ENCODE measurements at regions of chr1 and their contacts with region 1.

Region 1: GRCh38 chr1:194289569-194290266 is 1103.3 kb upstream of the B3GALT2 start:
- DNase-seq: peak; percentile 35
- ATAC-seq: peak; percentile 91
- H3K4me3 Mint-ChIP-seq: peak overlapping the region; percentile 38
- H3K27ac Mint-ChIP-seq: peak overlapping the region; percentile 77
- H3K4me1 Mint-ChIP-seq: peaks cover 23% of the 10 kb centered on the region
- H3K27me3 Mint-ChIP-seq: peaks cover 3% of the 10 kb centered on the region
- CTCF ChIP-seq: no peak

Region 2: DNA sequence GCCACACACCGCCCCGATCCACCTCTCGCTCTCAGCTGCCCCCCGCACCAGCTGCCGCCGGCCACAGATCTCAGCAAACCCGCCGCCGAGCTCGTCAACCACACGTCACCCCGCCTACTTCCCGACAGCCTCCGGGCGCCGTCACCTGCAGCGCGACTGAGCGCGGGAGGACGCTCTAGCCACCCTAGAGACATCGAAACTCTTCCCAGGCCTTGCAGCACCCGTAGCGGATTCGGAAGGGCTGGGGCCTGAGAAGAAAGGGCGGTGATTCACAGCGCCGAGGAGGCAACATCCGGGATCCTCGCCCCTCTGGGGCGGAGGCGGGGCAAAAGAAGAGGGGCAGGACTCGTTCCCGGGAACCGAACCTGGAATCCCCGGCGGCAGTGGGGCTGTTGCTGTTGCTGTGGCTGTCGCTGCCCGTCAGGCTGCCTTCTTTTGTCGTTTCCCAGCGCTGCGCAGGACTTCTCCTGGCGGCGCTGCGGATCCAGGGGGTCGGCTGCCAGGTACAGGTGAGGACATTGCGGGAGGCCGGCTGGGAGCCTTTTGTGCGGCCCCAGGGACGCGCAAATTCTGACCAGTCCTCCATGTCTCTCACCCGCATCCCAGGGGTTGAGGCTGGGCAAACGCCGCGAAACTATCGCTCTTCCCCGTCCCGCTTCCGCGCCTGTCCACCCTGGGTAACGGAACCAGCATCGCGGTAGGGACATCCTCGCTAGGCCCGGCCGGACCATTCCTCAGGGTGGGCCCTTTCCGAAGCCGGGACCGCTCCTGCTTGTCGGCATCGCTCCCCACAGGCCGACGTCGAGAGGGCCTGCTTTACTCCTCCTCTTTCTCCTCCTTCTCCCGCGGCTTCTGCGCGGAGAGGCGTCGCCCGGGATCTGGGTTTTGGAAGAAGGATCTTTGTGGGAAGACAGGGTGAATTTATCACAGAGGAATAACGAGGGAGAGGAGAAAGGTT is 1230.2 kb before region 1 on chr1 and contains the starts of genes RO60 and UCHL5:
- CTCF ChIA-PET with region 1: no interaction called
- POLR2A ChIA-PET with region 1: no interaction called
- intact Hi-C with region 1: loop called (anchors 2 kb)
- DNase-seq: peak; percentile 85
- ATAC-seq: peak; percentile 94
- H3K4me3 Mint-ChIP-seq: peak within 1 kb of the TSS; percentile 100
- H3K27ac Mint-ChIP-seq: peak within 1 kb of the TSS; percentile 99
- H3K4me1 Mint-ChIP-seq: peaks cover 54% of the 10 kb centered on the region
- H3K27me3 Mint-ChIP-seq: no peaks in the 10 kb centered on the region
- CTCF ChIP-seq: no peak
- total RNA-seq, gene RO60: 55.9 and 61.1 TPM in 2 replicates
- total RNA-seq, gene UCHL5: 32.3 and 36.4 TPM in 2 replicates

Region 3: DNA sequence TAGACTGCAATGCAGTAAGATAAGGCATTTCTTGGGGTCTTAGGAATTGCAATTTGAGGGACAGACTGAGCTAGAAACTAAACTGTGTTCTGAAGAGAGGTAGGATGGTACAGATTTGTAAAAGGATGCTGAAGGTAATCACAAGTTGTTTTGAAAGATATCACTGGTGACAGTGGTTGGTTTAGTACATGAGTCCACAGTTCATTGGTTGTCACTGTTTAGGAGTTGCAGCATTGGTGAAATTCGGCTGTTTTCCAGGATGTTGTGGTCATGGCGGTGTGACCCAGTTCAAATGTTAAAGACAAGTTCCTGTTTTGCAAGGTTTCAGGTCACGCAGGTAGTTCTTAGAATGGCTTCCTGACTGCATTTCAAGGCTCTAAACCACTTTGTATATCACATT is 810.5 kb before region 1 on chr1:
- CTCF ChIA-PET with region 1: no interaction called
- POLR2A ChIA-PET with region 1: interaction called, 3 read pairs
- intact Hi-C with region 1: loop called (anchors 1 kb)
- DNase-seq: peak; percentile 19
- ATAC-seq: peak; percentile 91
- H3K4me3 Mint-ChIP-seq: peak overlapping the region; percentile 35
- H3K27ac Mint-ChIP-seq: peak overlapping the region; percentile 81
- H3K4me1 Mint-ChIP-seq: peaks cover 47% of the 10 kb centered on the region
- H3K27me3 Mint-ChIP-seq: no peaks in the 10 kb centered on the region
- CTCF ChIP-seq: no peak

Region 4: DNA sequence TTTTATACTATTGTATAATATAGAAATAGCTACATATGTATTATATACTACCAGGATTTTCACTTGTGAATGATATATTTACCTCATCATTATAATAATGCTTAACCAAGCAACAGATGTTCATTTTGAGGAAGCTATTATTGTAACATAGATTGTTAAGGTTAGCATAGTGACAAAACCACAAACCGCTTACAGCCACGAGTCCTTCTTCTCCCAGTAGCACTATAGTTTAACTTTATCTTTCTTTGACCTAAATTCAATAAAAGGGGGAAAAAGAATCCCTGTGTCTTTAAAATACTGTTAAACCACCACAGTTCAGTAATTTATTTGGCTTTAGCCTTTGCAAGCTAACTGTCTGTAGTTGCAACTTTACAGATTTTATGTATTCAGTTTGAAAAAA is 63.9 kb before region 1 on chr1:
- CTCF ChIA-PET with region 1: no interaction called
- POLR2A ChIA-PET with region 1: no interaction called
- intact Hi-C with region 1: loop called (anchors 1 kb)
- DNase-seq: no peak
- ATAC-seq: peak; percentile 57
- H3K4me3 Mint-ChIP-seq: no peak overlapping the region
- H3K27ac Mint-ChIP-seq: no peak overlapping the region
- H3K4me1 Mint-ChIP-seq: peaks cover 9% of the 10 kb centered on the region
- H3K27me3 Mint-ChIP-seq: peaks cover 11% of the 10 kb centered on the region
- CTCF ChIP-seq: no peak

Region 5: GRCh38 chr1:194241215-194241614 is 48.5 kb before region 1 on chr1:
- CTCF ChIA-PET with region 1: no interaction called
- POLR2A ChIA-PET with region 1: no interaction called
- intact Hi-C with region 1: no loop called
- DNase-seq: no peak
- ATAC-seq: no peak
- H3K4me3 Mint-ChIP-seq: no peak overlapping the region
- H3K27ac Mint-ChIP-seq: no peak overlapping the region
- H3K4me1 Mint-ChIP-seq: no peaks in the 10 kb centered on the region
- H3K27me3 Mint-ChIP-seq: peaks cover 2% of the 10 kb centered on the region
- CTCF ChIP-seq: no peak

Measured in activated B cell treated with CpG ODN at 0.5 μM for 24 hours (primary cell).